Heart left ventricle (tissue), 16 donors: ENCODE measurements at regions of chr1 and their contacts with region 1.

Region 1: DNA sequence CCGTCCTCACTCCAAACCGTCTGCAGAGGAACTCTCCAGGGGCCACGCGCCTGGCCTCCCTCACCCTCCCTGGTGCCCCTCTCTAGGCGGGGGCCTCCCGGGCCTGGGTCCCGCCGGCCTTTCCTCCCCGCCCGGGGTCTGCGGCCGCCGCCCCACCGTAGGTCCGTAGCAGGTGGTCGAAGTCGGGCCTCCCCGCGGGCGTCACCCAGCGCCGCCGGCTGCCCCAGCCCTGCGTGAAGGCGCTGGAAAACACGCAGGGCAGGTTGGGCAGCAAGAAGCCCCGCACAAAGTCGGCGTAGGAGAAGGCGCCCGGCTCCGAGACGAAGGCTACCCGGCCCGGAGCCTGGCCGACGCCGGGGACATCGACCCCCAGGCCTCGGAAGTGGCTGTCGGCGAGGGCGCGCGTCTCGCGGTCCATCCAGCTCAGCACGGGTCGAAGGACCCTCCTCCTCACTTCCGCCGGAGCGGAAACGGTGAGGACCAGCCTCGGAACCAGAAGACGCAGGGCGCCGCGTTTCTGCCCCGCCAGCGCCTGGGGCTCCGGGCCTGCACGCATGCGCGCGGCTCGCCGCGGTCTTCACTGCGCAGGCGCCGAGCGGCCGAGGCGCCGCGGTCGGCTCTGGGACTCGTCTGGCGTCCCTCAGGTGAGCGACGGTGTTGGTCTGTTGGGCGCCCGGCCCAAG is at the starts of genes JMJD4 and SNAP47:
- DNase-seq: peak; percentile 92 to 96 (median 94)
- ATAC-seq: peak; percentile 72 to 94 (median 90)
- H3K4me3 ChIP-seq: peak within 1 kb of the TSS; percentile 73 to 99 (median 93)
- H3K27ac ChIP-seq: peak within 1 kb of the TSS; percentile 66 to 95 (median 88)
- H3K4me1 ChIP-seq: peaks cover 0 to 45% (median 27%) of the 10 kb centered on the region in 12 donors
- H3K27me3 ChIP-seq: no peaks in the 10 kb centered on the region
- CTCF ChIP-seq: no peak
- POLR2A ChIP-seq: peak in 1 of 2 donors; percentile 86
- total RNA-seq, gene JMJD4: 7.8 to 14.1 (median 11.5) TPM
- total RNA-seq, gene SNAP47: 24.7 to 106 (median 37.9) TPM

Region 2: GRCh38 chr1:227787513-227788270 is 52.7 kb after region 1 on chr1:
- intact Hi-C with region 1: loop called in 1 of 10 experiments (anchors 5 kb)
- DNase-seq: peak; percentile 90 to 97 (median 92)
- ATAC-seq: peak; percentile 95 to 96 (median 96)
- H3K4me3 ChIP-seq: peak overlapping the region; percentile 38 to 78 (median 60)
- H3K27ac ChIP-seq: peak overlapping the region in 11 of 12 donors; percentile 47 to 88 (median 61)
- H3K4me1 ChIP-seq: peaks cover 4 to 28% (median 18%) of the 10 kb centered on the region in 12 donors
- H3K27me3 ChIP-seq: peaks cover 0 to 13% (median 0%) of the 10 kb centered on the region in 9 donors
- CTCF ChIP-seq: no peak
- POLR2A ChIP-seq: peak in 1 of 2 donors; percentile 48